ENCODE measurements at regions of chr2 and their contacts with region 1.

Region 1: DNA sequence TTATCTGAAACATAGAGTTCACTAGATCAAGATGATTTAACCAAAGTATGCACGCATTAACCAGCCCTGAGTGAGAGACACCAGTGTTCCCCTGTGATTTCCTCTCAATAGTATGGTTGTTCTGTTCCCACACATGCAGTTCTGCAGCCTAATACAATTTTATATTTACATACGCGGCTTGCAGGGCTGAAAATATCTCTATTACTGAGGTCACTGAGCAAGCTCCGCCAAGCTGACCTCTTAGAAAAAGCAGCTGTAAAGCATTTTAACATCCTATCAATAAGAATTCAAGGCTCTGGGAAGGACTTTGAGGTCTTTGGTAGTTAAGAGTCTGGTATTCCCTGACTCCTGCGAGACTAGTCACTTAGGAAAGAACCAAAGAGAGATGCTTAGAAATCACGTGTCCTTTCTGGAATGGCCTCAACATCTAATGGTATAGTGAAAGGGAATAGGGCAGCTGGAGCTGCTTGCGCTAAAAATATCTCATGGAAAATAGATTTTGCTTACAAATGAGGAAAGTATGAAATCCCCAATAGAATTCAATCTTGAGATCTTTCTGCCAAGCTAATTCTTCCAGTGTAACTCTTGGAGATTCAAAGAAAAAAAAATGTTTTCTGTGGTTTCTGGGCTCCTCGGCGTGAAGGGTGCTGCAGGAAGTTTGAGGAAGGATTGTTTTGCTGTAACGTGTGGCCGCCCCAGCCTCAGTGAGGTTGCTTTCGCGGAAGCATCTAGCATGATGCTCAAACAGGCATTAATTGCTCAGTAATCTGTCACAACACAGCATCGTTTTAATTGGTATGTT is 59.2 kb downstream of the DOCK10 start:
- DNase-seq: peak; percentile 55
- H3K4me3 Mint-ChIP-seq: peak overlapping the region; percentile 52
- H3K27ac Mint-ChIP-seq: peak overlapping the region; percentile 88
- H3K4me1 Mint-ChIP-seq: peaks cover 82% of the 10 kb centered on the region
- H3K27me3 Mint-ChIP-seq: no peaks in the 10 kb centered on the region

Region 2: DNA sequence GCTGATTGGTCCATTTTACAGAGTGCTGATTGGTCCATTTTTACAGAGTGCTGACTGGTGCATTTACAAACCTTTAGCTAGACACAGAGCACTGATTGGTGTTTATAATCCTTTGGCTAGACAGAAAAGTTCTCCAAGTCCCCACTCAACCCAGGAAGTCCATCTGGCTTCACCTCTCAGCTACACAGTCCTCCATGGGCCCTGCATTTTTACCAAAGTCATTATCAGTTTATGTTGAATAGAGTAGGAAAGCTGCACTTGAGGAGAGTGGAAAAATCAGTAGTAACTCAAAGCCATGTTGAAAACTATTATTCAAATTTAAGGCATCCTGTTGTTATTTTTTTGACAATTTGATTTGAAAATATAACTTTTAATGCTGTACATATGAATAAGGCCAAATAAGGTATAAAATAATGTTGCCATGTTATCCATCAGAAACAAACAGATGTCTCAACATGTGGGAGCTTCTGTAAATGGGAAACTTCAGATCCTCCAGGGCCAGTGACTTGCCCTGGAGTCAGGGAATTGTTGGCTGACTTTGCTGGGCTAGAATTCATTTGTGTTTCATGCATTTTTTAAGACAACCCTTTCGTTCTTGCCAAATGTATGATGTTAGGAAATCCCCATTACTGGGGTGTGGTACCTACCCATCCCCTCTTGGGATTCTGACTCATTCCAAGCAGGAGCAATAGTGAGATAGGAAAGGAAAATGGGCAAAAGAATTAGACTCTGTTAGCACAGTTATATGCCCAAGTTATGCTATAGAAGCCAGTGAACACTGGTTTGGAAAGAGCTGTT is 229.2 kb before region 1 on chr2:
- CTCF ChIA-PET with region 1: interaction called, 3 read pairs
- POLR2A ChIA-PET with region 1: interaction called, 10 read pairs
- DNase-seq: no peak
- H3K4me3 Mint-ChIP-seq: no peak overlapping the region
- H3K27ac Mint-ChIP-seq: no peak overlapping the region
- H3K4me1 Mint-ChIP-seq: no peaks in the 10 kb centered on the region
- H3K27me3 Mint-ChIP-seq: no peaks in the 10 kb centered on the region

Region 3: DNA sequence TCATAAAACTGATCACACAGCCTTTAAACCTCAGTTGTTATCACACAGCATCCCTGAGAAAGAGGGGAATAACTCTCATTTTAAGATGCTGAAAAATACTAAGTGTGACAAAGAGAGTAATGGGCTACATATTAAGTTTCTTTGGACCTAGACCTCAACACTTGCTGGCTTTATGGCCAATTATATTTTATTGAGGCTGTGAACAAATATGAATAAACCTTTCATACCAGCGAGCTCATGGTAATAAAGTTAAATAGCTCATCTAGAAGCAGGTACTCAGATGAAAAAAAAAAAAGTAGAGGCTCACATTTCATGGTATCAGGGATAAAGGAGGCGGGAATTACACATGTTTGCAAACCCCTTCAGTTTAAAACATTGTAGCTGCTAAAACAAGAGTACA is 16.5 kb before region 1 on chr2:
- CTCF ChIA-PET with region 1: no interaction called
- POLR2A ChIA-PET with region 1: no interaction called
- DNase-seq: no peak
- H3K4me3 Mint-ChIP-seq: no peak overlapping the region
- H3K27ac Mint-ChIP-seq: no peak overlapping the region
- H3K4me1 Mint-ChIP-seq: peaks cover 47% of the 10 kb centered on the region
- H3K27me3 Mint-ChIP-seq: no peaks in the 10 kb centered on the region